IMR-90 (cell line): ENCODE measurements at regions of chr6 and their contacts with region 1.

Region 1: DNA sequence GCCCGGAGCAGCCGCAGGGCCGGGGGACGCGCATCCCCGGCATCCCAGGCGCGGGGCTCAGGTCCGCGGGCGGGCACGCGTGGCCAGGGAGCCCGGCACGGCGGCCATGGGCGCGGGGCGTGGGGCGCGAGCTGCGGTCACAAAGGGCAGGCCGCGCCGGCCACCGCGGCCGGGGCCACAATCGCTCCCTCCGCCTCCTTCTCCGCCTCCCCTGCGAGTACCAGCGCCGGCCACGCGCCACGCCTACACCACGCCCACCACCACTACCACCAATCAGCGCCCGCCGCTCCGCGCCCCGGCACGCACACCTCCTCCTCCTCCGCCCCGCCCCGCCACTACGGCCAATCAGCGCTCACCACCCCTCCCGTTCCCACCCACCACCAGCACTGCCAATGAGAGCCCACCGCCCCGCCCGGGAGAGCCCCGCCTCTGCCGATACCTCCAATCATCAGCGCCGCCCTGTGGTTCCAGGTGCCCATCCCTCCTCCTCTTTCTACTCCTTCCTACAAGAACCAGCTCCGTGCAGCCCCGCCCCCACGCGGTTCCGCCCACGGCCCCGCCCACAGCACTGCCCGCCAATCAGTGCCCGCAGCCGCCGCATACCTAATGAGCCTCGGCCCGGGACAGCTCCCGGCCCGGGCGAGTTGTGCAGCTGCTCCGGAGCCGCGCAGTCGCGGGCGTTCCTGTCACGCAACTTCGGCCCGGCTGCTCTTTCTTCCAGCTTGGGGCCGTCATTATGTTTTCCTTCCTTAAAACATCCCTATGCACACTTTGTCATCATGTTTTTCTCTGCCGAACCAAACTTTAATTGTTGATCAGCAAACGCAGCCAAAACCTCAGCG is at the start of gene RPS6KA2:
- DNase-seq: peak; percentile 99
- ATAC-seq: peak; percentile 93
- H3K4me3 ChIP-seq: peak within 1 kb of the TSS; percentile 87
- H3K27ac ChIP-seq: peak within 1 kb of the TSS; percentile 94
- H3K4me1 ChIP-seq: peaks cover 17% of the 10 kb centered on the region
- H3K27me3 ChIP-seq: no peaks in the 10 kb centered on the region
- CTCF ChIP-seq: no peak
- POLR2A ChIP-seq: peak; percentile 87
- RAD21 ChIP-seq: peak; percentile 8; the same call in 1 of the 2 replicates
- total RNA-seq, gene RPS6KA2: 22.2 and 26.9 TPM in 2 replicates

Region 2: GRCh38 chr6:166466178-166467122 is 160.8 kb before region 1 on chr6:
- CTCF ChIA-PET with region 1: no interaction called
- POLR2A ChIA-PET with region 1: no interaction called
- dilution Hi-C with region 1: no loop called
- in situ Hi-C with region 1: no loop called
- intact Hi-C with region 1: loop called (anchors 5 kb)
- DNase-seq: peak; percentile 89
- ATAC-seq: peak; percentile 90
- H3K4me3 ChIP-seq: no peak overlapping the region
- H3K27ac ChIP-seq: no peak overlapping the region
- H3K4me1 ChIP-seq: peaks cover 2% of the 10 kb centered on the region; the same call in 1 of the 2 replicates
- H3K27me3 ChIP-seq: no peaks in the 10 kb centered on the region
- CTCF ChIP-seq: no peak
- POLR2A ChIP-seq: no peak
- RAD21 ChIP-seq: no peak

Region 3: DNA sequence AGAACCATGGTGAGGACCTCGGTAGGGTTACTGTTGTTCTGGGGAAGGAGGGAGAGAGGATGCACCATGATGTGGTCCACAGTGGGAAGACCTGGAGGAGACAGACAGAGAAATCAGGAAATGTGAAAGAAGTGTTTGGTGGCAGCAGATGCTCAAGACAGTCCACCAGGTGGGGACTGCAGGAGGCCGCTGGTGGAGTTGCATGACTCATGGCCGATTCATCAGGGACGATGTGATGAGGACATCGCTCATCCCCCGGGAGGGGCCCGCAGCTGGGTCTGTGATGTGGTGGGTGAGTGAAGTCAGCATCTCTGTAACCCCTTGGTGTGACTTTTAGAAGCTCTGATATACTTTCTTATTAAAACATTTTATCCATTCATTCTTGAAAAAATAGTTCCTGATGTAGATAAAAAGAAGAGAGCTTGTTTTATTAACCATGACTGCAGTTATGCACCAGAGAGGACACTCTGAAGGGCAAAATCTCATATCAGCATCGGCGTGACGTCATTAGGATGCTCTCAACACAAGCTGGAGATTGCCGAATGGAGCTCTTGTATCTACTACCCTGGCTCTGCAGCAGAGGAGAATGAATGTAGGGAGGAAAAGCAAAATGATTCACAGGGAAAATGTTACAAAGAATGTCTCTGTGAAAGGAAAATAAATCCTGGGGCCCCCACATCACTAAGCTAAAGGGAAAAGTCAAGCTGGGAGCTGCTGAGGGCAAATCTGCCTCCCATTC is 112.0 kb before region 1 on chr6:
- CTCF ChIA-PET with region 1: interaction called, 4 read pairs
- POLR2A ChIA-PET with region 1: no interaction called
- dilution Hi-C with region 1: no loop called
- in situ Hi-C with region 1: no loop called
- intact Hi-C with region 1: loop called (anchors 1 kb)
- DNase-seq: peak; percentile 93
- ATAC-seq: peak; percentile 92
- H3K4me3 ChIP-seq: no peak overlapping the region
- H3K27ac ChIP-seq: no peak overlapping the region
- H3K4me1 ChIP-seq: peaks cover 10% of the 10 kb centered on the region
- H3K27me3 ChIP-seq: no peaks in the 10 kb centered on the region
- CTCF ChIP-seq: peak; percentile 67
- POLR2A ChIP-seq: no peak
- RAD21 ChIP-seq: peak; percentile 80

Region 4: GRCh38 chr6:166553563-166554271 is 73.5 kb before region 1 on chr6:
- CTCF ChIA-PET with region 1: no interaction called
- POLR2A ChIA-PET with region 1: no interaction called
- dilution Hi-C with region 1: no loop called
- in situ Hi-C with region 1: no loop called
- intact Hi-C with region 1: loop called (anchors 5 kb)
- DNase-seq: peak; percentile 94
- ATAC-seq: peak; percentile 94
- H3K4me3 ChIP-seq: no peak overlapping the region
- H3K27ac ChIP-seq: no peak overlapping the region
- H3K4me1 ChIP-seq: peaks cover 19% of the 10 kb centered on the region
- H3K27me3 ChIP-seq: no peaks in the 10 kb centered on the region
- CTCF ChIP-seq: no peak
- POLR2A ChIP-seq: no peak
- RAD21 ChIP-seq: no peak

Region 5: DNA sequence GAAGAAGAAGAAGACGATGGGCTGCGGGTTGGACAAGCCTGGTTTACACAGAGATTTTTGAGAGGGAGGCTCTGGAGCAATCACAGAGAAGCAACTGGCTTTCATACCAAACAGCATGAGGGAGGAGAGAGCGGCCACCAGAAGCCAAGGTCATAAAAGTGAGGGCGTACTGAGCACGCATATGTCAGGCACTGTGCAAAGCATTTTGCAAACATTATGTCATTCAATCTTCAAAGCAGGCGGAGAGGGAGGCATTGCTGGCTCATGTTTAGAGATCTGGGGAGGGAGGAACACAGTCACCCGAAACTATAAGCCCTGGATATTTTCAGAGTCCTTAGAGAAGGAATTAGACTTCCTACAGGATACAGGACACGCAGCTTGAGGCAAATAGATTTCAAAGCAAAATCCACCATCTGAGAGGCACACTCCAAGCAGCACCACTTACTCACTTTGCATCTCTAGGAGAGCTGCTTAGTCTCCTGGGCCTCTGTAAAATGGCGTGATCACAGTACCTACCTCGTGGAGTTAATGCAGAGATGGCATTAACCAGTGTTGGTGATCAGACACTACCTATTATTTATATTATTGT is 65.4 kb before region 1 on chr6:
- CTCF ChIA-PET with region 1: no interaction called
- POLR2A ChIA-PET with region 1: no interaction called
- dilution Hi-C with region 1: no loop called
- in situ Hi-C with region 1: loop called (anchors 5 kb)
- intact Hi-C with region 1: no loop called
- DNase-seq: peak; percentile 36
- ATAC-seq: peak; percentile 12; the same call in 1 of the 2 replicates
- H3K4me3 ChIP-seq: no peak overlapping the region
- H3K27ac ChIP-seq: no peak overlapping the region
- H3K4me1 ChIP-seq: peaks cover 15% of the 10 kb centered on the region
- H3K27me3 ChIP-seq: no peaks in the 10 kb centered on the region
- CTCF ChIP-seq: no peak
- POLR2A ChIP-seq: no peak
- RAD21 ChIP-seq: no peak

Region 6: DNA sequence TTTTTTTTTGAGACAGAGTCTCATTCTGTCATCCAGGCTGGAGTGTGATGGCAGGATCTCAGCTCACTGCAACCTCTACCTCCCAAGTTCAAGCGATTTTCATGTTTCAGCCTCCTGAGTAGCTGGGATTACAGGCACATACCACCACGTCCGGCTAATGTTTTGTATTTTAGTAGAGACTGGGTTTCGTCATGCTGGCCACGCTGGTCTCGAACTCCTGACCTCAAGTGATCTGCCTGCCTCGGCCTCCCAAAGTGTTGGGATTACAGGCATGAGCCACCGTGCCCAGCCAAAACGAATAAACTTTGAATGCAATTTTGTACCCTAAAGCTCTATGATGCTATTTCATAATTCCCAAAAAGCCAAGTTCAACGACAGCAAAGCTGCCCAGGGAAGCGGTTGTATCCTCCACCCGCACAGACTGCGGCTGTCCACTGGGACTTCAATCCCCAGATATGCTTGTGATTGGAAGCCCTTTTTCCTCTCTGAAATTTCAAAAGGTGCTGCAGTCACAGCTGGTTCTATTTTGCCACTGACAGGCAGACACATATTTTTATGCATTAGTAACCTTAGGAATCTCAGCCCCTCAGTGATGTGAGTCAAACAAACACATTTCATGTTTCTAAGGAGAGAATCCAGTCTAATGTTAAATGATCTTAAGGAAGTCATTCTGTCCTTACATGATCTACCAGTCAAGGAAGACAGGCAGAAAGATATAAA is 32.0 kb before region 1 on chr6:
- CTCF ChIA-PET with region 1: interaction called, 3 read pairs
- POLR2A ChIA-PET with region 1: no interaction called
- dilution Hi-C with region 1: no loop called
- in situ Hi-C with region 1: no loop called
- intact Hi-C with region 1: loop called (anchors 2 kb)
- DNase-seq: peak; percentile 92
- ATAC-seq: peak; percentile 66
- H3K4me3 ChIP-seq: no peak overlapping the region
- H3K27ac ChIP-seq: peak overlapping the region; percentile 92
- H3K4me1 ChIP-seq: peaks cover 51% of the 10 kb centered on the region
- H3K27me3 ChIP-seq: no peaks in the 10 kb centered on the region
- CTCF ChIP-seq: no peak
- POLR2A ChIP-seq: 0 out of 2 replicates have a peak, but pooled peaks have one; percentile 6
- RAD21 ChIP-seq: no peak

Region 7: GRCh38 chr6:166929542-166930189 is 302.4 kb after region 1 on chr6:
- CTCF ChIA-PET with region 1: no interaction called
- POLR2A ChIA-PET with region 1: no interaction called
- dilution Hi-C with region 1: no loop called
- in situ Hi-C with region 1: no loop called
- intact Hi-C with region 1: no loop called
- DNase-seq: no peak
- ATAC-seq: peak; percentile 51; the same call in 1 of the 2 replicates
- H3K4me3 ChIP-seq: no peak overlapping the region
- H3K27ac ChIP-seq: no peak overlapping the region
- H3K4me1 ChIP-seq: no peaks in the 10 kb centered on the region
- H3K27me3 ChIP-seq: no peaks in the 10 kb centered on the region
- CTCF ChIP-seq: no peak
- POLR2A ChIP-seq: no peak
- RAD21 ChIP-seq: no peak

Region 8: DNA sequence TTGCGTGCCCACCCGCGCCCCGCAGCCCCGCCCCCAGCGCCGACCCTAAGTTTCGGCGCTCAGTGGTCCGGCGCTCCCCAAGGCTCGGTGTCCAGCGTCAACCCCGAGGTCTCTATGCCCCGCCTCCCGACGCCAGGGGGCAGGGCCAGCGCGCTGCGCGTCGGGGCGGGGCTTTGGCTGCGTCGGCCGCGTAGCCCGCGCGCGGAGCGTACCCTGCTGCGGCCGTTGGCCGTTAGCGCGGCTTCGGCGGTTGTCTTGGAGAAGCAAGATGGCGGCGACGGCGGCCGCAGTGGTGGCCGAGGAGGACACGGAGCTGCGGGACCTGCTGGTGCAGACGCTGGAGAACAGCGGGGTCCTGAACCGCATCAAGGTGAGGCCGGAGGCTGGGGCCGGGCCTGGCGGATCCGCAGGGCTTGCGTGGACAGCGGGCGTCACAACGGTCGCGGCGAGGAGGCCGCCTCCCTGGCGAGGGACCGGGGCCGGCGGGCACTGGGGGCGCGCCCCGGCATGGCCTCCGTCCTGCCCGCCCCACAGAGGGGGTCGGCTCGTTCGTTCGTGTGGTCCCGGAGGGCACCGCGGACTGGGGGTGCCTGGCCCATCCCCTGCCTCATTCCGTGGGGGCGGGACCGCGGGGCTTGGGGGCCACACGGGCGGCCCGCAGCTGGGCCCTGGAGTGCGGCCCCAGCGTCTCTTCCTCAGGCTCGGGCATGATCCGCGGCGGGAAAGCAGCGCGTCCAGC is 372.1 kb after region 1 on chr6 and contains the start of gene CEP43:
- CTCF ChIA-PET with region 1: no interaction called
- POLR2A ChIA-PET with region 1: no interaction called
- dilution Hi-C with region 1: no loop called
- in situ Hi-C with region 1: loop called (anchors 25 kb)
- intact Hi-C with region 1: loop called (anchors 5 kb)
- DNase-seq: peak; percentile 93
- ATAC-seq: peak; percentile 97
- H3K4me3 ChIP-seq: peak within 1 kb of the TSS; percentile 84
- H3K27ac ChIP-seq: peak within 1 kb of the TSS; percentile 70
- H3K4me1 ChIP-seq: peaks cover 9% of the 10 kb centered on the region
- H3K27me3 ChIP-seq: no peaks in the 10 kb centered on the region
- CTCF ChIP-seq: no peak
- POLR2A ChIP-seq: no peak
- RAD21 ChIP-seq: no peak
- total RNA-seq, gene CEP43: 8.6 and 19.4 TPM in 2 replicates